ENCODE measurements at regions of chr15 and their contacts with region 1.

Region 1: GRCh38 chr15:56252386-56252785 is 8.7 kb upstream of the RFX7 start:
- DNase-seq: no peak

Region 2: GRCh38 chr15:56432304-56432703 is 179.9 kb after region 1 on chr15:
- intact Hi-C with region 1: loop called (anchors 10 kb)
- DNase-seq: no peak